ENCODE measurements at regions of chr13 and their contacts with region 1.

Region 1: DNA sequence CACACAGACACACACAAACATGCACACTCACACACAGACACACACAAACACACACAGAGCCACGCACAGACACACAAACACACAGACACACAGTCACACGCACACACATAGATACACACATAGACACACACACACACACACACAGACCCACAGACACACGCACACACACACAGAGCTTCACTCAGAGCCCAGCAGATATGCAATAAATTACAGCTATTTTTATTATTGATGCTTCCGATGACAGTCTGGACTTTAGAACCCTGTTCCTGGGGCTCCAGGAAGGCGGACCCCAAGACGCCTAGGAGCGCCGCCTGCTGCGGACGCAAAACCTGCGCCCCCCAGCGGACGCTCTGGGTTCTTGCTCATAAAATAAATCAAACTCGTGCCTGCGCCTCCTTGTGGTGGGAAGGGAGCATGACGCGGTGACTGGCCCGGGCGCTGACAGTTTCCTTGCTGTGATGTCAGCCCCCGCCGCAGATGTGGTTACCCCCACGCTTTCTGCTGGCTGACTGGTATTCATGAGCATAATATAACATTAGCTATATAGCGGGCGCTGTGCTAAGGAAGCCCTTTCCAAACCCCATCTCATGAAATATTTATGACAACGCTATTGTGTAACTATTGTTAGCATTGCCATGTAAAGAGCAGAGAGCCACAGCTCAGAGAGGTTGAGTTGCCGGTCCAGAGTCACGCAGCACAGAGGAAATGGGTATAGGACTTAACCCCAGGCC is 64.4 kb upstream of the TM9SF2 start:
- H3K4me3 Mint-ChIP-seq: peak overlapping the region; percentile 61
- H3K27ac Mint-ChIP-seq: peak overlapping the region; percentile 81
- H3K4me1 Mint-ChIP-seq: peaks cover 52% of the 10 kb centered on the region
- H3K27me3 Mint-ChIP-seq: peaks cover 22% of the 10 kb centered on the region

Region 2: GRCh38 chr13:99176309-99177276 is 260.3 kb before region 1 on chr13:
- intact Hi-C with region 1: loop called (anchors 2 kb)
- H3K4me3 Mint-ChIP-seq: peak overlapping the region; percentile 33
- H3K27ac Mint-ChIP-seq: no peak overlapping the region
- H3K4me1 Mint-ChIP-seq: peaks cover 46% of the 10 kb centered on the region
- H3K27me3 Mint-ChIP-seq: peaks cover 49% of the 10 kb centered on the region

Region 3: DNA sequence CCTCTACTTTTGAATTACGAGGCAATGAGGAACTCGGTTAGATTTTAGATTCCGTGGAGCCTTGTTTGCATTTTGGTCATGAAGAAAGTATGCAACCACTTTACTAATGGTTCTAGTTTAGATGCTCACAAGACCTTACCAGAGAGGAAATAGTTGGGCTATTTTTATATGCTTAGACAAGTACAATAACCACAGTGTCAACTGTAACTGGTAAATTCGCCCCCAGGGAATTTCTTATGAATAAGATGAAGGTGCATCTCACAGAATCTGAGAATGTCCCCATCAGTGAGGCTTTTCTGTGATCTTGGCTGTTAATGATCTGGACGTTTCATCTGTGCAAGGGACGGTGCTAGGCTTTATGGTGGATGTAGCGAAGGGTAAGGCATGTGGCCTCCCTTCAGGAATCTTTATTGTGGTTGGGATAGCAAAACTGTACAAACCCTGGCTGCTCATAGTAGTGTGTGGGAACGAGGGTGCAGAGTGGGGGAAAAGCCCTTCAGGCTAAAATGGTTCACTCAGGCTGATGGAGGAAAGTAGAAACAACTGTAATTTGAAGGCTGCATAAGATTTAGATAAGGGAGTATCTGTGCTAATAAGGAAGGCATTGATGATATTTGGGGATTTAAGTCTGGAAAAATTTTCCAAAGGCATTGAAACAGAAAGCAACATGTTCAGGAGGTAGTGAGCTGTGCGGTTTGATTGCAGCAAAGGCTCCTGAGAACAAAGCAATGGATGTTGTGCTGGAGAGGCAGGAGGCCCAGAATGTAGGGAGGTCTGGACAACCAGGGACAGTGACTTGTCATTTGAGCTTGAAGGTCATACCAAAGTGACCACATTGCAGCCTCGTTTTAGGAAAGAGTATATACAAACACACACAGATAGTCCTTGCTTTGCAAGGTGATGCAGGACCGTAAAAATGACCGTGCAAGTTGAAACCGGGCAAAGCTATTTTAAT is 207.8 kb before region 1 on chr13:
- intact Hi-C with region 1: no loop called
- H3K4me3 Mint-ChIP-seq: peak overlapping the region; percentile 13
- H3K27ac Mint-ChIP-seq: peak overlapping the region; percentile 35
- H3K4me1 Mint-ChIP-seq: peaks cover 65% of the 10 kb centered on the region
- H3K27me3 Mint-ChIP-seq: no peaks in the 10 kb centered on the region

Region 4: GRCh38 chr13:99322297-99323103 is 114.4 kb before region 1 on chr13:
- intact Hi-C with region 1: loop called (anchors 5 kb)
- H3K4me3 Mint-ChIP-seq: peak overlapping the region; percentile 47
- H3K27ac Mint-ChIP-seq: peak overlapping the region; percentile 88
- H3K4me1 Mint-ChIP-seq: peaks cover 80% of the 10 kb centered on the region
- H3K27me3 Mint-ChIP-seq: no peaks in the 10 kb centered on the region

Region 5: DNA sequence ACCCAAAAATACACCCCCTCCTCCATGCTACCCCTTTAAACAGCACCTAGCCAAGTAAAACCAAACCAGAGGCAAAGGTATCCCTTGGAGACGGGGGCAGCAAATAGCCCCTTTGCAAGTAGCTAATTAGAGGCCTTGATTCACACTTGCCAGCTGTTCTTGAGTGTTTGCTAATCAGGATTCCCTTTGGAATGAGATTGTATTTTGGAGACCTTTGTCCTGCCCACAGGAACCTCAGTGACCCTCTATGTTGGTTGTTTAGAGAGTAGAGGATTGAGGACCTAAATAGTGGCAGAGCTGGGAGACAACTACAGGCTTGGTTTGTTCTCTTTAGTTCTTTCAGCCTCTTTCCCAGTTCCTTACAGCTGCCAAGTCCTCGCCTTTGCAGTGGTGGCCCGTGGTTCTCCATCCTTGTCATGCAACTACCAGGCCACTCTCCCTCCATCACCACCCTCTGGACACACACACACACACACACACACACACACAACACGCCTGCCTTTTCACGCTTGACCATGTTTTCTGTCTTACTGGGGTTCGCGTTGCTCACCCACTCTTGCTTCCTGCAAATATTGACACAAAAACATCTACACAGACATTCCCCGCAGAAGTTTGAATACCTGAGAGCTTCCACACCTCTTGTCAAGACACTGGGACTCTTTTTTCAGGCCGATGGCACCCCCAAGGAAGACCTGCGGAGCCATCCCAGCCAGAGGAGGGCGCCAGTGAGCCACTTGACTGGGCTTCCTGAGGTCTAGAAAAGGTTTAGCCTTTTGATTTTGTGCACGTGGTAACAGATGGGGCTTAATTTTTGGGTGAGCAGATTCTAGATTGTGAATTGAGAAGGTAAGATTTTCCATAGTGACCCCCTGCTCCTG is 49.7 kb before region 1 on chr13:
- intact Hi-C with region 1: loop called (anchors 1 kb)
- H3K4me3 Mint-ChIP-seq: no peak overlapping the region
- H3K27ac Mint-ChIP-seq: peak overlapping the region; percentile 84
- H3K4me1 Mint-ChIP-seq: peaks cover 74% of the 10 kb centered on the region
- H3K27me3 Mint-ChIP-seq: peaks cover 2% of the 10 kb centered on the region

Region 6: GRCh38 chr13:99406799-99407201 is 30.1 kb before region 1 on chr13:
- intact Hi-C with region 1: loop called (anchors 2 kb)
- H3K4me3 Mint-ChIP-seq: peak overlapping the region; percentile 57
- H3K27ac Mint-ChIP-seq: peak overlapping the region; percentile 94
- H3K4me1 Mint-ChIP-seq: peaks cover 73% of the 10 kb centered on the region
- H3K27me3 Mint-ChIP-seq: peaks cover 2% of the 10 kb centered on the region

Region 7: GRCh38 chr13:99471221-99472121 is 34.6 kb after region 1 on chr13:
- intact Hi-C with region 1: no loop called
- H3K4me3 Mint-ChIP-seq: no peak overlapping the region
- H3K27ac Mint-ChIP-seq: peak overlapping the region; percentile 1
- H3K4me1 Mint-ChIP-seq: peaks cover 30% of the 10 kb centered on the region
- H3K27me3 Mint-ChIP-seq: no peaks in the 10 kb centered on the region